ENCODE measurements at regions of chr20 and their contacts with region 1.

Region 1: DNA sequence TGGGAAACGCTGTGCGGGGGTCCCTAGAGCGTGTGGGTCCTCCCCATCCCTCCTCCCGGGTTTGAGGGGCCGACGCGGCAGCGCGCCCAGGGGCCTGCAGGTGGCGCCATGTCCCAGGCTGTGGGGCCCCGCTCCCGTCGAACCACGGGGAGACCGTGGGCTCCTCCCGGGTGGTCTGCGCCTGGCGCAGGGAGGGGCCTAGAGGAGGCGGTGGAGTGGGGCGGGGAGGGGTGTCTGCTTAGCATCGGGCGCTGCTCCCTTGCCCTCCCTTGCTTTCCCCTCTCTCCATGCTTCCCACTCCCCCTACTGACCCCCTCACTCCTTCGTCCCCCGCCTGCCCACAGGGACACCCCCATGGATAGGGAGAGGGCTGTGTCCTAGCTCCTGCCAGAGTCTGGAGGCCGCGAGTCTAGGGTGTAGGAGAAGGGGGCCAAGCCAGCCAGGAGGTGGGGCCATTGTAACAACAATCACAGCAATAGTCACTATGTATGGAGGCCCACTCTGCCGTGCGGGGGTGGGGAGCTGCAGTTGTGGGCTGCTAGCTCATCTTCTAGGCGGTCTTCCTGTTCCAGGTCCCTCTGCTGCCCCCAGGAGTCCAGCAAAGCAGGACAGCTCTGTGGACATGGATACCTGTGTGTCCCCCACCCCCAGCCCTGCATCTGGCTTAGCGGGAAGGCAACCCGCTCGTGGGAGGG is 51.7 kb downstream of the CHMP4B start:
- DNase-seq: peak; percentile 75 to 93 (median 86)
- H3K4me3 ChIP-seq: no peak overlapping the region
- H3K27ac ChIP-seq: no peak overlapping the region
- H3K4me1 ChIP-seq: no peaks in the 10 kb centered on the region
- H3K27me3 ChIP-seq: no peaks in the 10 kb centered on the region
- CTCF ChIP-seq: peak; percentile 67

Region 2: GRCh38 chr20:34069341-34070078 is 206.7 kb after region 1 on chr20:
- intact Hi-C with region 1: loop called (anchors 10 kb)
- DNase-seq: peak in 4 of 5 donors; percentile 81 to 93 (median 87)
- H3K4me3 ChIP-seq: no peak overlapping the region
- H3K27ac ChIP-seq: no peak overlapping the region
- H3K4me1 ChIP-seq: peaks cover 2 to 16% (median 8%) of the 10 kb centered on the region in 3 donors
- H3K27me3 ChIP-seq: no peaks in the 10 kb centered on the region
- CTCF ChIP-seq: peak; percentile 93